PC-3 (cell line): ENCODE measurements at regions of chr3 and their contacts with region 1.

Region 1: DNA sequence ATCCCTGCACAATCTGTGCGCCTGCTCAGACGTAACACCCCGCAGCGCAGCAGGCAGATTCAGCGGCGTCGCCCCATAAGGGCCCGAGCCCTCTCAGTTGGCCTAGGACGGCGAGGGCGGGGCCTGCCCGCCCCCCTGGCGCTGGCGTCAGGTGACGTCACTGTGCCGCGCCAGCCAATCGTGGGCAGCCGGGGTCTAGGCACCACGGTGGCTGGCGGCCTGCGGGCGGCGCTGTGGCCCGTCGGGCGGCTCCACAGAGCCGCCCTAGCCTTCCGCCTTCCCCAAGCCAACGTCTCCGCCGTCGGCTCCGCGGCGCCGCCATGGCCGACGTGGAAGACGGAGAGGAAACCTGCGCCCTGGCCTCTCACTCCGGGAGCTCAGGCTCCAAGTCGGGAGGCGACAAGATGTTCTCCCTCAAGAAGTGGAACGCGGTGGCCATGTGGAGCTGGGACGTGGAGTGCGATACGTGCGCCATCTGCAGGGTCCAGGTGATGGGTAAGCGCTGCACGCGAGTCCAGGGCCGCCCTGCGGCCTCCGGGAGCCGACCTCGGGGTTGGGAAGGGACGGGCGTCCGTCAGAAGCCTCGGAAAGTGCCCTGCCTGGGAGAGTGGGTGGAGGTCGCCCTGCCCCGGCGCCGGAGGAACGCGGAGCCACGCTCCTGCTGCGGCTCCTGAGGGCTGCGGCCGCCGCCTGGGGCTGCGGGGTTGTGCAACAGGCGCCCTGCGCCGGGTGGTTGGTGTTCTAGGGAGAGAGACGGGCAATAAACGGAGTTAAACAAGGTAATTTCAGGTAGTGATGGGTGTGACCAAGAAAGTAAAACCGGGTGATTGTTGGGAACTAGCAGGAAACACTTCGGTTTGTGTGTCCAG is at the start of gene RNF7:
- DNase-seq: peak; percentile 95
- ATAC-seq: peak; percentile 95
- H3K4me3 ChIP-seq: peak within 1 kb of the TSS; percentile 95
- H3K27ac ChIP-seq: peak within 1 kb of the TSS; percentile 74
- H3K4me1 ChIP-seq: peaks cover 19% of the 10 kb centered on the region
- H3K27me3 ChIP-seq: no peaks in the 10 kb centered on the region
- CTCF ChIP-seq: peak; percentile 71
- total RNA-seq, gene RNF7: 42.3 and 42.9 TPM in 2 replicates

Region 2: GRCh38 chr3:141690431-141691072 is 47.7 kb before region 1 on chr3:
- CTCF ChIA-PET with region 1: no interaction called
- POLR2A ChIA-PET with region 1: no interaction called
- intact Hi-C with region 1: no loop called
- DNase-seq: no peak
- ATAC-seq: no peak
- H3K4me3 ChIP-seq: no peak overlapping the region
- H3K27ac ChIP-seq: no peak overlapping the region
- H3K4me1 ChIP-seq: no peaks in the 10 kb centered on the region; the same call in 1 of the 2 replicates
- H3K27me3 ChIP-seq: no peaks in the 10 kb centered on the region
- CTCF ChIP-seq: no peak

Region 3: DNA sequence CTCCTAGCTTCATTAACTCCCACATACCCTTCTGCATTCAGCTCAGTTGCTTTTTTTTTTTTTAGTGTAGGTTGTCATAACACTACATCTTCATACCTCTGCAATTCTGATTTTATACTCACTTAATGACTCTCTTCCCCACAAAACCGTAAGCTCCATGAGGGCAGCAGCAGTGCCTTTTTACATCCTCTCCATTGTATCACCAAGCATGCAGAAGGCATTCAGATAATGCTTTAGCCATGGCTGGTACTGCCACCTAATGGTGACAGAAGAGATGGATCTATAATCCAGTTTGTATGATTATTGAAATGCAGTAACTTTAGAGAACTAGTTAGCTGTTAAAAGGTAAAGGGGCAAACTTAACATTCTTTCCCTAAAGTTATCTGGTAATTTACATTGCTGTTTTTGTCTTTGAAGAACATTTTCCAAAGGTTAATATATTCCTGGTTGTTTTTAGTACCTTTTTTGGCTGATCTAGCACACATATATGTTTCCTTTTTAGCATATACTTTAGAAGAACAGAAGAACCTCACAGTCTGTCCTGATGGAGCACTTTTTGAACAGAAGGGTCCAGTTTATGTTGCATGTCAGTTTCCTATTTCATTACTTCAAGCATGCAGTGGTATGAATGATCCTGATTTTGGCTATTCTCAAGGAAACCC is 175.0 kb after region 1 on chr3:
- CTCF ChIA-PET with region 1: no interaction called
- POLR2A ChIA-PET with region 1: interaction called, 7 read pairs
- intact Hi-C with region 1: loop called (anchors 1 kb)
- DNase-seq: peak; percentile 71
- ATAC-seq: peak; percentile 70
- H3K4me3 ChIP-seq: no peak overlapping the region
- H3K27ac ChIP-seq: no peak overlapping the region
- H3K4me1 ChIP-seq: no peaks in the 10 kb centered on the region
- H3K27me3 ChIP-seq: no peaks in the 10 kb centered on the region
- CTCF ChIP-seq: peak; percentile 75